Left cardiac atrium (tissue), 4 donors: ENCODE measurements at regions of chr2 and their contacts with region 1.

Region 1: DNA sequence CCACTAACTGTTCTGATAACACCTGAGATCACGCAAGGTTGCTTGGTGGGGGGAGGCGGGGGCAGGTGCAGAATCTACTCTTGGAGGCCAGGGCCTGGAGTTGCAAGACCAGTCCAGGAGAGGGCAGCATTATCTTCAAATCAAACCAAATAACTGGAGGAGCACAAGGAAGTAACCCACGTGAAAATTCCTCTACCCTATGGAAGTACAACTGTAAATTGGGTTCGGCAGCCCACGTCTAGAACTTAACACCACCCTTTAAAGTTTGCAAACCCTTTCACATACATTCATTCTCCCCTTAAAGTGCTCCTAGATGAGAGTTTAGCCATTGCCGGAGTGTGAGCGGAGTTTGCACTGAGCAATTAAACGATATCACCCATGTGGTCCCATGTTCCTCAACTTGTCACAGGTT is 19.6 kb upstream of the CXCR1 start:
- DNase-seq: peak; percentile 55
- ATAC-seq: peak; percentile 89 to 90

Region 2: DNA sequence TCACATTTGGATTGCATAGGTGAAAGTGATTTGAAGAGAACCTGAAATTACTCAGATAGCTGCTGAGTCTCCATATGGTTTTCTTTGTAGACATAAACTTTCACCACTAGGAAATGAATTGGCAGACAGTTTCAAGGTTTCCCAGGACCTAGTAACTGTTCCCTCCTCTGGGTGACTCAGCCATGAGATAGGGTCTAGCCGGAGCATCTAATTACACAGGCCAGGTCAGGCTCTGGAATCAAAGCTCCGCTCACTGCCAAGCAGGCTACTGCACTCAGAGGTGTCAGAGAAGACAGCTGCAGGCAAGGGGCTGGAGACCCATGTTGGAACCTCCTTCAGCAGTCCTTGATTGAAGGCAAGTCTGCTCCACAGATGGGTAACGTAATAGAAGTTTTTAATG is 612.8 kb before region 1 on chr2:
- intact Hi-C with region 1: no loop called
- DNase-seq: peak; percentile 31
- ATAC-seq: peak; percentile 84 to 94

Region 3: DNA sequence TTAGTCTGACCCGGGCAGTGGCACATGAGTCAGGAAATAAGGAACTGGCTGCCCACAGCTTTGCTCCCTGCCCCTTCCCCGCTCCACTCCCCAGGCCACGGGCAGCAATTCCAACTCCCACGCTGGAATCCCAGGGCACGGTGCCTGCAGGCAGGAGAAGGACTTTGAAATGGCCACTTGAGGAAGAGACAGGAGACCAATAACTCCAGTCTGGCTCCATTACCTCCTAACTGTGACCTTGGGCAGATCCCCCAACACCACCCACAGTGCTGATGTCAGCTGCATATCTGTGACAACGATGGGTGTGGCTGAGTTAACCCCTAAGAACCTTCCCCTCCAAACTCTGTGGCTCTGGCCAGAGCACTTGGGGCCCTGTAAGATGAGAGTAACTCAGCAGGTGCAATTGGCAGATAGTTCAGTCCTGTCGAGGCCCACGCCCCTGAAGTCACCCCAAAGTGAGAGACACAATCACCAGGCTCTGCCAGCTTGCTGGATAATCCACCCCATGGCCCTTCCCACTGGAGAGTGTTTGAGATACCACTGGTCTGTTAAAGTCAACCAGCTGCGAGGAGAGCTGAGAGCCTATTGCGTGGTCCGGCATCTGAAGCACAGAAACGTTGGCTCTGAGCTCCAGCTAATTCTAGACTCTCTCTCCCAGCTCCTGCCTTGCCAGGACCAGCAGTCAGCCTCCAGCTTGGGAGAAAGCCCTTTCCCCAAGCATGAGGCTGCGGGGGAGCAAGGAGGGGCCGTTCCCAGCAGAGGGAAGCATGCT is 358.7 kb before region 1 on chr2:
- intact Hi-C with region 1: no loop called
- DNase-seq: peak; percentile 64
- ATAC-seq: peak; percentile 58 to 63

Region 4: GRCh38 chr2:218257390-218257981 is 71.1 kb after region 1 on chr2:
- intact Hi-C with region 1: loop called in 1 of 2 experiments (anchors 5 kb)
- DNase-seq: no peak
- ATAC-seq: peak in 1 of 2 donors; percentile 14

Region 5: DNA sequence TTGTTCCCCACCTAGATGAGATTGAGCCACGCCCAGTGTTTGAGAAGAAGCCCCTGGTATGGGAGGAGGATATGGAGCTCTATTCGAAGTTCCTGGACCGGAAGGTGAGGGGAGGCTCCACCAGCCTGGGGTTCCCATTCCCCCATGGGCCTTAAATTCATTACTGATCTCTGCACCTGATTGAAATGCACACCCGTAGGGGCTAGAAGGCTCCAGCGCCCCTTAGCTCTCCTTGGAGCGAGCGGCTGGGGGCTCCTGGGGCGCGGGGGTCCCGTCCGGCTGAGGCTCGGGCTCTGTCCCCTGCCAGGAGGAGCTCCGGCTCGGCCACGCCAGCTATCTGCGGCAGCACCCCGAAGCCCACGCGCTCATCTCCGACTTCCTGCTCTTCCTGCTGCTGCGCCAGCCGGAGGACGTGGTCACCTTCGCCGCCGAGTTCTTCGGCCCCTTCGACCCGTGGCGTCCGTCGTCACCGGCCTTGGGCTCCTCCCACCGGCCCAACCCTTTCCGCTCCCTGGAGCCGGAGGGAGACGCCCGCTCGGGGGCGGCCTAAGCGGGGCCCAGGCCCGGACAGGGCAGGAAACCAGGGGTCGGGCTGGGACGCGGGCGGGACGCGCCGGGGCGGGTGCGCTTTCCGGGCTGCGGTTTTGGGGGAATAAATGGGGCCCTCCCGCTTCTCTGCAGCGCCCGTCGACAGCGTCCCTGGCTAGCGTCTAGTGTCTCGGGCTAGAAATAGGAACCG is 181.2 kb after region 1 on chr2:
- intact Hi-C with region 1: loop called in 1 of 2 experiments (anchors 10 kb)
- DNase-seq: peak; percentile 95
- ATAC-seq: peak; percentile 95